GM10248 (cell line): ENCODE measurements at regions of chr2 and their contacts with region 1.

Region 1: GRCh38 chr2:223837287-223838061 is at the start of gene AP1S3:
- DNase-seq: peak; percentile 88
- CTCF ChIP-seq: peak; percentile 45

Region 2: GRCh38 chr2:223779877-223780276 is 57.6 kb before region 1 on chr2:
- CTCF ChIA-PET with region 1: no interaction called
- POLR2A ChIA-PET with region 1: no interaction called
- DNase-seq: peak; percentile 60
- CTCF ChIP-seq: peak; percentile 44

Region 3: DNA sequence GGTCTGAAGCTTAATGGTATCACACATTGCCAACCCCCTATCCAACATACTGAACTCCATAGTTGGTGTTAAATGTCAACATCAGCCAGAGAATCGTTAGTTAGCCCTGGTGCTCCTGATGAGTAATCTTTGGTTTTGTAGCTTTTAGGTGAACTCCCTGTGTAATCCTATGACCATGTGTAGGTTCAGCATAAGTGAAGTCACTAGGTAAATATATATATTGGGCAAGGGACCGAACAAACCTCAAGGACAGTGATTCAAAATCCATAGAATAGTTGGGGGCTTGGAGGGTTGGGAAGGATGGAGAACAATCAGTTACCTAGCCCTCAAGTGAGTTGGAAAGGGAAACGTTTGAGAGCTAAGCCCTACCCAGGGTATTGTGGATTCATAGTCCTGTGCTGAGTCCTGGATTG is 16.0 kb after region 1 on chr2:
- CTCF ChIA-PET with region 1: interaction called, 11 read pairs
- POLR2A ChIA-PET with region 1: no interaction called
- DNase-seq: no peak
- CTCF ChIP-seq: no peak